ENCODE measurements at regions of chr1 and their contacts with region 1.

Region 1: GRCh38 chr1:60765204-60765603 is 317.2 kb upstream of the NFIA start:
- DNase-seq: no peak
- ATAC-seq: peak in 2 of 4 donors; percentile 45 to 64
- H3K4me3 ChIP-seq: no peak overlapping the region
- H3K27ac ChIP-seq: no peak overlapping the region
- H3K4me1 ChIP-seq: peaks cover 0 to 35% (median 10%) of the 10 kb centered on the region in 12 donors
- H3K27me3 ChIP-seq: peaks cover 0 to 4% (median 0%) of the 10 kb centered on the region in 9 donors
- CTCF ChIP-seq: peak; percentile 31 to 71 (median 59)
- POLR2A ChIP-seq: no peak

Region 2: DNA sequence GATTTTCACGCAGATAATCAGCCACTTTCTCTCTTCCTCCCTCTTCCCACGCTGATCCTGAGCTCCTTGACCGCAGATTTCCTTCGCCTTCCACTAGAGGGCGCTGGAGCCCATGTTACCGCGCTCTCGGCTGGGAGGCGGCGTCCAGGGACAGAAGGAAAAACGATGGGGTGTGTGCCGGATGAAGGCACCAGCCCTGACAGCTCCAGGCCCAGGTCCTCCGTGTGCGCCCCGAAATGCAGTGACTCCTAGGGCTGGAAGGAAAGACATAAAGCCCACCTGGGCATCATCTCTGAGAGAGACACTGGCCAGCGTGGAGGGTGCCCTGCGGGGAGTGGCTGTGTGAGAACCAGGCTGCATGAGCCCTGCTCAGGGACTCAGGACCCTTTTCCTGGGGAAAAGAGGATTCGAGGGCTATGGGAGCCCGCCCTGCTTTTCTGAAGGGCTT is 793.7 kb before region 1 on chr1:
- intact Hi-C with region 1: loop called in 9 of 10 experiments (anchors 5 to 10 kb)
- DNase-seq: peak; percentile 55 to 84 (median 68)
- ATAC-seq: peak; percentile 45 to 92 (median 88)
- H3K4me3 ChIP-seq: no peak overlapping the region
- H3K27ac ChIP-seq: no peak overlapping the region
- H3K4me1 ChIP-seq: peaks cover 0 to 8% (median 3%) of the 10 kb centered on the region in 12 donors
- H3K27me3 ChIP-seq: peaks cover 0 to 9% (median 0%) of the 10 kb centered on the region in 9 donors
- CTCF ChIP-seq: peak; percentile 81 to 93 (median 88)
- POLR2A ChIP-seq: no peak

Region 3: GRCh38 chr1:59986516-59987310 is 778.5 kb before region 1 on chr1:
- intact Hi-C with region 1: loop called in 1 of 10 experiments (anchors 10 kb)
- DNase-seq: no peak
- ATAC-seq: no peak
- H3K4me3 ChIP-seq: no peak overlapping the region
- H3K27ac ChIP-seq: no peak overlapping the region
- H3K4me1 ChIP-seq: no peaks in the 10 kb centered on the region
- H3K27me3 ChIP-seq: peaks cover 0 to 14% (median 0%) of the 10 kb centered on the region in 9 donors
- CTCF ChIP-seq: no peak
- POLR2A ChIP-seq: no peak

Region 4: DNA sequence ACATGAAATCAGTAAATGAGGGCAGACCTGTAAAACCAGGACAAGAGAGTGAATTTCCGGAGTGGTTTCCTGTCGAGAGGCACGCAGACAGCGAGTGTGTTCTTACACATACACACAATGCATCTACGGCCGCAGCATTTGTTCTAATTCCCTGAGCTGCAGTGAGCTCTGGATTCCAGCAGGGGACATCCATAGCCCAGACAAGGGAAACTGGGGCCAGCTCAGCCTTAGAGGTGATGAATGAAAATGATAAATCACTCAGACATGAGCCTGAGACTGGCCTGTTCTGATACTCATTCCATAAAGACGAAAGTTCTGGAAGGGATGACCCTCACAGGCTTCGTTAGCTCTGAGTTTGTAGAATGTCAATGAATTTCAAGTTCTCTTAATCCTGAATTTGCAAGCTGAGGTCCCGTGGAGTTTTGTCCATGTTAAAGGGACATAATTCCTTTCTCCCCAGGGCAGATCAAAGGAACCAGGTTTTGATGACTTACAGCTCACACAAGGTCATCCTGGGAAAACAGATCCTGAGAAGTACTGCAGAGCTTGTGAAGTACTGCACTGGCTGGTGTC is 483.8 kb before region 1 on chr1:
- intact Hi-C with region 1: loop called (anchors 1 to 5 kb)
- DNase-seq: peak in 4 of 5 donors; percentile 43 to 72 (median 54)
- ATAC-seq: peak; percentile 87 to 97 (median 92)
- H3K4me3 ChIP-seq: no peak overlapping the region
- H3K27ac ChIP-seq: no peak overlapping the region
- H3K4me1 ChIP-seq: peaks cover 0 to 18% (median 8%) of the 10 kb centered on the region in 12 donors
- H3K27me3 ChIP-seq: no peaks in the 10 kb centered on the region
- CTCF ChIP-seq: peak; percentile 80 to 94 (median 90)
- POLR2A ChIP-seq: no peak

Region 5: DNA sequence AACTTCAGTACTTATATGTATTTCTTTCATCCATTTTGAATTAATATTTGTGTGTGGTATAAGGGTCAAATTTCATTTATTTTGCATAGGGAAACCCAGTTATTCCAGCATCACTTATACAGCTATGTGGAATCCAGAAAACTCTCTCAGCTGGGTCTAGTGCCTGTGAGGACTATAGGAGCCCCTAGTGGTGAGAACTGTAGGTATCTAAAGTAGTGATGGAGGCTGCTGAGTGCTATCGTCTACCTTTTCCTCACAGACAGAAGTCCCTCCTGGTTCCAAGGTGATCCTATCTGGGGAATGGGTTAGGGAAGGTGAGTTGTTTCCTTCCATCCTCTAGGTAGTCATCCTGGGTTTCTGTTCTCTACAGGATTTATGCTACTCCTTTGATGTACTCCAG is 339.7 kb before region 1 on chr1:
- intact Hi-C with region 1: loop called in 1 of 10 experiments (anchors 5 kb)
- DNase-seq: no peak
- ATAC-seq: no peak
- H3K4me3 ChIP-seq: no peak overlapping the region
- H3K27ac ChIP-seq: no peak overlapping the region
- H3K4me1 ChIP-seq: peaks cover 0 to 4% (median 0%) of the 10 kb centered on the region in 12 donors
- H3K27me3 ChIP-seq: no peaks in the 10 kb centered on the region
- CTCF ChIP-seq: peak in 4 of 12 donors; percentile 14 to 21 (median 19)
- POLR2A ChIP-seq: no peak

Region 6: DNA sequence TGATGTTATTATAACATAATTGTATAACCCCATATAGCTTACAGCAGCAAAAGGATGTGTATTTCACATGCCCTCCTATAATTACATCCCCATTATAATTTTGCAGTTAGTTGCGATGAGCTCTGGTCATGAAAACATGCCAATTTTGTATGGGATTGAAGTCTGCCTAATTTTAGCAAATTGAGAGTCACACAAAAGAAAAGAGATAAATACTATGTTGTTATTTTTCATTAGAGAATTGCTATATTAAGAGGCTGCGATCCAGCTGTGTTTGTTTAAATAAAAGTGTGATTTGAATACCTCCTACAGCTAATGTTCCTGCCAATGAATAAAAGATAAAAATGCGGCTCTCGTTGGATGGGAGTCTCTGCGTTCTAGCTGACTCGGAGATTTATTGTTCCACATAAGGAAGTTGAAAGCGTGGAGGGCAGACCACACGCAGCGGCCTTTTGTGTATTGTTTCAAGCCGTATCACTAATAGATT is 143.8 kb before region 1 on chr1:
- intact Hi-C with region 1: loop called in 2 of 10 experiments (anchors 10 kb)
- DNase-seq: peak in 1 of 5 donors; percentile 16
- ATAC-seq: peak in 2 of 4 donors; percentile 36 to 58
- H3K4me3 ChIP-seq: peak overlapping the region in 1 of 12 donors; percentile 6
- H3K27ac ChIP-seq: no peak overlapping the region
- H3K4me1 ChIP-seq: peaks cover 4 to 25% (median 12%) of the 10 kb centered on the region in 12 donors
- H3K27me3 ChIP-seq: no peaks in the 10 kb centered on the region
- CTCF ChIP-seq: no peak
- POLR2A ChIP-seq: no peak

Region 7: GRCh38 chr1:60727552-60727951 is 37.7 kb before region 1 on chr1:
- intact Hi-C with region 1: no loop called
- DNase-seq: no peak
- ATAC-seq: no peak
- H3K4me3 ChIP-seq: no peak overlapping the region
- H3K27ac ChIP-seq: no peak overlapping the region
- H3K4me1 ChIP-seq: no peaks in the 10 kb centered on the region
- H3K27me3 ChIP-seq: no peaks in the 10 kb centered on the region
- CTCF ChIP-seq: no peak
- POLR2A ChIP-seq: no peak

Region 8: GRCh38 chr1:61013189-61013945 is 248.2 kb after region 1 on chr1:
- intact Hi-C with region 1: no loop called
- DNase-seq: peak in 1 of 5 donors; percentile 40
- ATAC-seq: peak; percentile 69 to 88 (median 83)
- H3K4me3 ChIP-seq: no peak overlapping the region
- H3K27ac ChIP-seq: no peak overlapping the region
- H3K4me1 ChIP-seq: peaks cover 0 to 20% (median 0%) of the 10 kb centered on the region in 12 donors
- H3K27me3 ChIP-seq: peaks cover 0 to 4% (median 0%) of the 10 kb centered on the region in 9 donors
- CTCF ChIP-seq: no peak
- POLR2A ChIP-seq: no peak